ENCODE measurements at regions of chr16 and their contacts with region 1.

Region 1: GRCh38 chr16:2867987-2868789 is 10.2 kb upstream of the PRSS22 start:
- DNase-seq: peak; percentile 82 to 98
- H3K4me3 ChIP-seq: peak overlapping the region; percentile 67 to 77
- H3K27ac ChIP-seq: peak overlapping the region; percentile 87 to 93
- H3K4me1 ChIP-seq: no peaks in the 10 kb centered on the region
- H3K27me3 ChIP-seq: no peaks in the 10 kb centered on the region
- CTCF ChIP-seq: peak; percentile 94 to 98 (median 94)

Region 2: DNA sequence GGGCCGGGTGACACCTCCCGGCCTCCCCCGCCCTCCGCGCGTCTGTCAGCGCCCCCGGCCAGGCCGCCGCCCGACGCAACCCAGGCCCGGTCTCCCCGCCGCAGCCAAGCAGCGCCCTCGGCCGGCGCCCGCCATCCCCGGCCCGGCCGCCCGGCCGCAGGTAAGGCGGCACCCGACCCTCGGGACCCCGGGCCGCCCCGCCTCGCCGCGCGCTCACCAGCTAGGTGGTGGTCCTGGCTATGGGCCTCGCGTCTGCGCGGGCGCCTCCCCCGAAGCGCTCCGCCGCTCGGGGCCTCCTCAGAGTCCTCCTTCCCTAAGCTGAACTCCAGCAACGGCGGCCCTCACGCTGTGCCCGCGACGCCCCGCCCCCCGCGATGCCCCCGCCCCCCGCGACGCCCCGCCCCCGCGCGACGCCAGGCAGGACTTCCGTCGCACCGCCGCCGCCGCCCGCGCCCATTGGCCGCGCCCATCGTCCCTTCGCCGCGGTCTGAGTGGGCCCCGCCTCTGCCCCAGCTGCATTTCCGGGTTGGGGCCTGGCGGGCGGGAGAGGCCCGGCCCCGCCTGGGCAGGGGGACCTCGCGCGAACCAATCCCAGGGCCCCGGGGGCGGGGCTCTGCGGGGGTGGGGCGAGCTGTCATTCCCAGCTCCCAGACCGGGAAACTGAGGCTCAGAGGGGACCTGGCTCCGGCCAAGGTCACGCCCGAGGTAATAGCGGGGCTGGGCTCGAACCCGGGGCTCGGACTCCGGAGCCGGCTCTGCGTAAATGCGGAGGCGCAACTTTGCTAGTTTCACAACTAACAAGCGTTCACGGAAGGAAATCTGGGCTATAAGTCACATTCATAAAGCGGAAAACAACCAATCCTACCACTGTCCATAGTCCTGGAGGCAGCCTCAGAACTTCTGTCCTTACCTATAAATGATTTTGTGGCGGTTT is 194.9 kb before region 1 on chr16:
- intact Hi-C with region 1: loop called (anchors 2 kb)
- DNase-seq: peak; percentile 85 to 97
- H3K4me3 ChIP-seq: peak overlapping the region; percentile 67 to 83
- H3K27ac ChIP-seq: peak overlapping the region; percentile 66 to 75
- H3K4me1 ChIP-seq: peaks cover 0 to 14% of the 10 kb centered on the region in 2 donors
- H3K27me3 ChIP-seq: no peaks in the 10 kb centered on the region
- CTCF ChIP-seq: no peak

Region 3: GRCh38 chr16:2752035-2752849 is 115.9 kb before region 1 on chr16 and contains the start of gene SRRM2:
- intact Hi-C with region 1: loop called (anchors 1 kb)
- DNase-seq: peak; percentile 67 to 97
- H3K4me3 ChIP-seq: peak within 1 kb of the TSS; percentile 86 to 96
- H3K27ac ChIP-seq: peak within 1 kb of the TSS; percentile 97 to 98
- H3K4me1 ChIP-seq: peaks cover 18 to 35% of the 10 kb centered on the region in 2 donors
- H3K27me3 ChIP-seq: no peaks in the 10 kb centered on the region
- CTCF ChIP-seq: no peak
- total RNA-seq, gene SRRM2: 359 TPM

Region 4: DNA sequence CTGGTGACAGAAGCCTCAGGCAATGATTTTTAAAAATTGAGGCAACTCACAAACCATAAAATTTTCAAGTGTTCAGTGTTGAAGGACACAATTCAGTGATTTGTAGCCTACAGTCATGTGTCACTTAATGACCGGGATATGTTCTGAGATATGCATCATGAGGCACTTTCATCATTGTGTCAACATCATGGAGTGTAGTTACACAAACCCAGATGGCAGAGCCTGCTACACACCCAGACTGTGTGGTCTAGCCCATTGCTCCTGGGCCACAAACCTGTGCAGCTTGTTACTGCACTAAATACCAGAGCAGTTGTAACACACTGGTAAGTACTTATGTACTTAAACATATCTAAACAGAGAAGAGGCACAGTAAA is 68.3 kb before region 1 on chr16:
- intact Hi-C with region 1: no loop called
- DNase-seq: no peak
- H3K4me3 ChIP-seq: no peak overlapping the region
- H3K27ac ChIP-seq: no peak overlapping the region
- H3K4me1 ChIP-seq: no peaks in the 10 kb centered on the region
- H3K27me3 ChIP-seq: peaks cover 3% of the 10 kb centered on the region
- CTCF ChIP-seq: no peak

Region 5: GRCh38 chr16:2838928-2839327 is 29.3 kb before region 1 on chr16:
- intact Hi-C with region 1: loop called (anchors 1 kb)
- DNase-seq: no peak
- H3K4me3 ChIP-seq: no peak overlapping the region
- H3K27ac ChIP-seq: no peak overlapping the region
- H3K4me1 ChIP-seq: peaks cover 0 to 11% of the 10 kb centered on the region in 2 donors
- H3K27me3 ChIP-seq: no peaks in the 10 kb centered on the region
- CTCF ChIP-seq: peak; percentile 34 to 63 (median 56)

Region 6: GRCh38 chr16:2911580-2912329 is 43.6 kb after region 1 on chr16 and contains the start of gene FLYWCH1:
- intact Hi-C with region 1: loop called (anchors 5 kb)
- DNase-seq: peak; percentile 92 to 99
- H3K4me3 ChIP-seq: peak within 1 kb of the TSS; percentile 73 to 87
- H3K27ac ChIP-seq: peak within 1 kb of the TSS; percentile 83 to 88
- H3K4me1 ChIP-seq: peaks cover 0 to 15% of the 10 kb centered on the region in 2 donors
- H3K27me3 ChIP-seq: no peaks in the 10 kb centered on the region
- CTCF ChIP-seq: no peak
- total RNA-seq, gene FLYWCH1: 74.3 TPM

Region 7: GRCh38 chr16:3112881-3113574 is 244.8 kb after region 1 on chr16:
- intact Hi-C with region 1: no loop called
- DNase-seq: no peak
- H3K4me3 ChIP-seq: peak overlapping the region; percentile 62 to 84
- H3K27ac ChIP-seq: peak overlapping the region in 1 of 2 donors; percentile 42
- H3K4me1 ChIP-seq: peaks cover 0 to 15% of the 10 kb centered on the region in 2 donors
- H3K27me3 ChIP-seq: no peaks in the 10 kb centered on the region
- CTCF ChIP-seq: no peak

Measured in ascending aorta (tissue), 2 donors.